Activated B cell treated with CpG ODN at 0.5 μM for 24 hours (primary cell): ENCODE measurements at regions of chr2 and their contacts with region 1.

Region 1: GRCh38 chr2:27628767-27629709 is at the starts of genes CCDC121 and GPN1:
- DNase-seq: peak; percentile 85
- ATAC-seq: peak; percentile 99
- H3K4me3 Mint-ChIP-seq: no peak within 1 kb of the TSS
- H3K27ac Mint-ChIP-seq: peak within 1 kb of the TSS; percentile 69
- H3K4me1 Mint-ChIP-seq: peaks cover 12% of the 10 kb centered on the region
- H3K27me3 Mint-ChIP-seq: no peaks in the 10 kb centered on the region
- CTCF ChIP-seq: no peak
- total RNA-seq, gene CCDC121: 0.69 and 0.71 TPM in 2 replicates
- total RNA-seq, gene GPN1: 36.9 and 39.3 TPM in 2 replicates

Region 2: DNA sequence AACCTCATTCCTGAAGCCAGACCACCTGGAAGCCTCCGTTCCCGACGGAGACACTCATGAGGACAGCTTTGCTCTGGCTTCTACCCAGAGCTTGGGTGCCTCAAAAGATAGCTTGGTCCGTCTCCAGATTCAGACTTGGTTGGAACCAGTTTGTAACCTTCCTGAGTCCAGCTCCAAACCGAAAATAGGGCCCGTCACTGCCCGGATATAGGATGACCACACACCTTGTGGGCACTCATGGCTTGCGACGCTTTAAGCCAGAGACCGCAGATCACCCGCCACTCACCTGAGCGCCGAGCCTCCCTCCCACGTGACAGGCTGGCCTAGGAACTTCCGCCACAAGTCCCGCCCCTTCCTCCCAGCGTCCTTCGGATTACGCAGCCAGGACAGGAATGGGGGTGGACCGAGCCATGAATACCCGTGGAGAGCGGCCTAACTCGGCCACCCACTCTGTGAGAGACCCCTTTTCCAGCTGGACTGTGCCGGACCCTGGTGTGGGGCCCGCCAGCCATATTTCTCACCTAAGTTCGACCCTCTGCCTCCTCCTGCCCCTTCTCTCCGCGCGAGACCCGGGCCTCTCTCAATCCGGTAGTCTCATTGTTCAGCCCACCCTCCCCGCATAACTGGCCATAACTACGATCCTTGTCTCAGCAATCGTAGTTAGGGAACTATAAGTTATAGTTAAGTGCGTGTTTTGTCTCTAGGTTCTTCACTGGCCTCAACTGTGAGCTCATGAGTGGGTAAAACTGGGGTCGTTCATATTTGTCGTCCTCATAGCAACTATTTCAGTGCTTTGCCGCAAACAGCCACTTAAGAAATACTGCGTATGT is 306.1 kb before region 1 on chr2 and contains the start of gene MPV17:
- CTCF ChIA-PET with region 1: no interaction called
- POLR2A ChIA-PET with region 1: interaction called, 4 read pairs
- intact Hi-C with region 1: loop called (anchors 2 kb)
- DNase-seq: peak; percentile 79
- ATAC-seq: peak; percentile 95
- H3K4me3 Mint-ChIP-seq: peak within 1 kb of the TSS; percentile 99
- H3K27ac Mint-ChIP-seq: peak within 1 kb of the TSS; percentile 96
- H3K4me1 Mint-ChIP-seq: peaks cover 25% of the 10 kb centered on the region
- H3K27me3 Mint-ChIP-seq: no peaks in the 10 kb centered on the region
- CTCF ChIP-seq: no peak
- total RNA-seq, gene MPV17: 78.1 and 98.3 TPM in 2 replicates

Region 3: GRCh38 chr2:27409321-27410073 is 219.5 kb before region 1 on chr2 and contains the start of gene PPM1G:
- CTCF ChIA-PET with region 1: no interaction called
- POLR2A ChIA-PET with region 1: interaction called, 10 read pairs
- intact Hi-C with region 1: loop called (anchors 10 kb)
- DNase-seq: peak; percentile 98
- ATAC-seq: peak; percentile 96
- H3K4me3 Mint-ChIP-seq: peak within 1 kb of the TSS; percentile 87
- H3K27ac Mint-ChIP-seq: peak within 1 kb of the TSS; percentile 95
- H3K4me1 Mint-ChIP-seq: peaks cover 31% of the 10 kb centered on the region
- H3K27me3 Mint-ChIP-seq: no peaks in the 10 kb centered on the region
- CTCF ChIP-seq: no peak
- total RNA-seq, gene PPM1G: 74.7 and 75.2 TPM in 2 replicates

Region 4: GRCh38 chr2:27582695-27583389 is 46.2 kb before region 1 on chr2 and contains the start of gene ZNF512:
- CTCF ChIA-PET with region 1: no interaction called
- POLR2A ChIA-PET with region 1: interaction called, 7 read pairs
- intact Hi-C with region 1: loop called (anchors 1 kb)
- DNase-seq: peak; percentile 81
- ATAC-seq: peak; percentile 95
- H3K4me3 Mint-ChIP-seq: peak within 1 kb of the TSS; percentile 97
- H3K27ac Mint-ChIP-seq: peak within 1 kb of the TSS; percentile 90
- H3K4me1 Mint-ChIP-seq: peaks cover 48% of the 10 kb centered on the region
- H3K27me3 Mint-ChIP-seq: peaks cover 4% of the 10 kb centered on the region
- CTCF ChIP-seq: no peak
- total RNA-seq, gene ZNF512: 45.4 and 48.7 TPM in 2 replicates

Region 5: DNA sequence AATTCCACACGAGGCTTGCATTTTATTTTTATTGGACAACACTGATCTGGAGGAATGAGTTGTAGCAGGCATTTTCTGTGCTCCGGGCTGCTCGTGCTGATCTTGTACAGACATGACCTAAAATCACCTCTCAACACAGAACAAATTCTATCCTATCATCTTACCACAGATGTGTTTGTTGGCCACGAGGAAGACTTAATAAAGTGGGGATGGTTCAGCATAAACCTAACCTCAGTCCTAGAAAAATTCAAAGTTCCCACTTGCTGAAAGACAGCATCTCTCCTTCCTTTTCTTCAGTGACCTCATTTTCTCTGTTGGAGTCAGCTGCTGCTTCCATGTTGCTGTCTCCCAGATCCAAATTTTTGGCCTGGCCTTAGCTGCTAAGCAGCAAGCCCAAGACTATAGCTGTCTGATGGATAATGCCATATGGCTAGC is 215.8 kb after region 1 on chr2:
- CTCF ChIA-PET with region 1: no interaction called
- POLR2A ChIA-PET with region 1: no interaction called
- intact Hi-C with region 1: no loop called
- DNase-seq: no peak
- ATAC-seq: no peak
- H3K4me3 Mint-ChIP-seq: no peak overlapping the region
- H3K27ac Mint-ChIP-seq: no peak overlapping the region
- H3K4me1 Mint-ChIP-seq: no peaks in the 10 kb centered on the region
- H3K27me3 Mint-ChIP-seq: no peaks in the 10 kb centered on the region
- CTCF ChIP-seq: no peak

Region 6: GRCh38 chr2:27890146-27890923 is 261.3 kb after region 1 on chr2 and contains the starts of genes BABAM2 and RBKS:
- CTCF ChIA-PET with region 1: no interaction called
- POLR2A ChIA-PET with region 1: interaction called, 3 read pairs
- intact Hi-C with region 1: loop called (anchors 1 kb)
- DNase-seq: peak; percentile 93
- ATAC-seq: peak; percentile 78
- H3K4me3 Mint-ChIP-seq: peak within 1 kb of the TSS; percentile 99
- H3K27ac Mint-ChIP-seq: peak within 1 kb of the TSS; percentile 99
- H3K4me1 Mint-ChIP-seq: peaks cover 74% of the 10 kb centered on the region
- H3K27me3 Mint-ChIP-seq: peaks cover 2% of the 10 kb centered on the region
- CTCF ChIP-seq: no peak
- total RNA-seq, gene BABAM2: 51.9 and 55.6 TPM in 2 replicates
- total RNA-seq, gene RBKS: 2.5 and 3.1 TPM in 2 replicates